Activated T-helper 1 cell treated with anti-CD3 and anti-CD28 coated beads, Interleukin-12 subunit alpha, Interleukin-12 subunit beta, Interleukin-2, Interleukin-4 antibody, amounts not matched to agents 30 ng/mL and 10 ng/mL and 1 ng/mL, durations not matched to agents 14 hours and 24 hours and 36 hours (primary cell): ENCODE measurements at regions of chr7 and their contacts with region 1.

Region 1: DNA sequence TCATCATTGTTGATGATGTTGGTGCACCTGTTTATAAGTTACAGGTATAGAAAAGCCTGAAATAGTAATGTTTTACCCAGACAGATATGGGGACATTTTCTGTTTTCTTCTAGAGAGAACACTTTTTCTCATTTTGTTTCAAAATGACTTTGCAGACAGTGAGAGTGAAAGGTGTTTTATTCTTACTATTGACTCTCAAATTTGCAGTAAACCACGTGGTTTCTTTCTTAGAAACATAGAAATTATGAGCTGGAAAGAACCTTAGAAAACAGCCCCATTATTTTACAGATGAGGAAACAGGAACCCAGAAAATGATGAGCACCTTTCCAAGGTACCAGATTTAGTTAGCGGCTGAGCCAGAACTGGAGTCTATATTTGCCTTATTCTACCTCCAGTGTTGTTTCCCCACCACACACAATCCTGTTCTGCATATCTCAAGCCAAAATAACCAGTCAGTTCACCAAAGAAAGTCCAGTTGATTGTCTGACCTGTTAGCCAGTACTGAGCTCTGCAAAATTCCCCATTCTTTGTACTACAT is 138.9 kb upstream of the AHR start:
- DNase-seq: no peak
- H3K4me3 Mint-ChIP-seq: no peak overlapping the region
- H3K27ac Mint-ChIP-seq: peak overlapping the region; percentile 55
- H3K4me1 Mint-ChIP-seq: peaks cover 30% of the 10 kb centered on the region
- H3K27me3 Mint-ChIP-seq: peaks cover 10% of the 10 kb centered on the region

Region 2: GRCh38 chr7:16999541-17000267 is 159.9 kb before region 1 on chr7:
- intact Hi-C with region 1: loop called (anchors 5 kb)
- DNase-seq: peak; percentile 14
- H3K4me3 Mint-ChIP-seq: peak overlapping the region; percentile 62
- H3K27ac Mint-ChIP-seq: peak overlapping the region; percentile 77
- H3K4me1 Mint-ChIP-seq: peaks cover 17% of the 10 kb centered on the region
- H3K27me3 Mint-ChIP-seq: peaks cover 4% of the 10 kb centered on the region

Region 3: DNA sequence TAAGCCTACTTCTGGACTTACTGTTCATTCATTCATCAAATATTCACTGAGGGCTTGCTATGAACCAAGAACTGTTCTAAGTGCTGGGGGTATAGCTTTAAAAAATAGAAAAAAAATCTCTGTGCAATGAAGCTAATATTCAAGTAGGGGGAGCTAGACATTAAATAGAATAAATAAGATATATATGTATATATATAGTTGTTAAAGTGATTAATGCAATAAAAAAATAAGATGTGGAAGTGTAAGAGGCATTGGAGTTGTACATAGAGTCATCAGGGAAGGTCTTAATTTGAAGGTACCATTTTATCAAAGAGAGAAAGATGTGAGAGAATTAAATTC is 96.6 kb before region 1 on chr7:
- intact Hi-C with region 1: loop called (anchors 5 kb)
- DNase-seq: no peak
- H3K4me3 Mint-ChIP-seq: no peak overlapping the region
- H3K27ac Mint-ChIP-seq: no peak overlapping the region
- H3K4me1 Mint-ChIP-seq: peaks cover 17% of the 10 kb centered on the region
- H3K27me3 Mint-ChIP-seq: no peaks in the 10 kb centered on the region

Region 4: GRCh38 chr7:17144322-17144721 is 15.2 kb before region 1 on chr7:
- intact Hi-C with region 1: loop called (anchors 1 kb)
- DNase-seq: peak; percentile 49
- H3K4me3 Mint-ChIP-seq: peak overlapping the region; percentile 1
- H3K27ac Mint-ChIP-seq: peak overlapping the region; percentile 25
- H3K4me1 Mint-ChIP-seq: peaks cover 46% of the 10 kb centered on the region
- H3K27me3 Mint-ChIP-seq: no peaks in the 10 kb centered on the region

Region 5: DNA sequence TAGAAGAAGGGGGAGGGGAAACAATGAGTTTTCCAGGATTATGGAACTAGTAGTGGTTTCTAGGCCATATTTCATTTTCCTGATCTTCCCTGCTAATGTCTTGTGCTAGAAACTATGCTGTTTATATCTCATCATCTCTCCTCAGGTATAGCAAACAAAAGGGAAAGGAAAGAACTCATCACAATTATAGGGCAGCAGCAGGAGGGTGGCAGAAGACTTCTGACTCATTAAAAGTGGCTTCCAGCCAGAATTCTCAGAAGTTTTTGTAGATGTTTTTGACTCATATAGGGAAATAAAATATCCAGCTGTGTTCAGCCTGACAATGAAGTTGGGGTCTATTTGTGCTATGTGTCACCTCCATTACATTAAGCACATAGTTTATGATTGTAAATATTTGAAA is 145.4 kb after region 1 on chr7:
- intact Hi-C with region 1: loop called (anchors 1 kb)
- DNase-seq: no peak
- H3K4me3 Mint-ChIP-seq: peak overlapping the region; percentile 11
- H3K27ac Mint-ChIP-seq: peak overlapping the region; percentile 26
- H3K4me1 Mint-ChIP-seq: peaks cover 18% of the 10 kb centered on the region
- H3K27me3 Mint-ChIP-seq: no peaks in the 10 kb centered on the region